ENCODE measurements at regions of chr11 and their contacts with region 1.

Region 1: DNA sequence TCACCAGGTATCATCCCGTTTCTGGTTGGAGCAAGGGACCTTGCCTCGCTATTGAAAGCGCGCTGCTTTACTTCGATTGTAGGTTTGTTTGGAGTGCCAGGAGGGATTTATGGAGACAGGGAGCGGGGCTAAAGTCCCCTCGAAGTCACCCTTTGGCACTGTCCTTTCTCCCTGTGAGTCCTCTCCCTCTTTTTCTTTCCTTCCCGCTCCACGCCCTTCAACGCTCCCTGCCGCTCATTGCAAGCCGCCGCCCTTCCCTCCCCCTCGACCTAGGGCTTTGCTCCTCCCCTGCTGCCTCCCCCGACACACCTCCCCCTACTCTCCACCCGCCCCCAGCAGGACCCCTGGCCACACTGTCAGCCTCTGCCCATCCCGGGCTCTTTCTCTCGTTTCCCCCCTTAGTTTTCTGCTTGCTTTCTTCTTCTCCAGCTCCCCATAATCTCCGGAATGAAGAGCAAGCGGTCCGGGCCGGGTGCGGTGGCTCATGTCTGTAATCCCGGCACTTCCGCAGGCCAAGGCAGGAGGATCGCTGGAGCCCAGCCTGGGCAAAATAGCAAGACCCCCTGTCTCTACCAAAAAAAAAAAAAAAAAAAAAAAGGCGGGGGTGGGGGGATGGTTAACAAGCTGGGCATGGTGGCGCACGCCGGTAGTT is 41.0 kb downstream of the AHNAK start:
- DNase-seq: no peak
- H3K4me3 ChIP-seq: no peak overlapping the region
- H3K4me3 Mint-ChIP-seq: no peak overlapping the region
- H3K27ac ChIP-seq: no peak overlapping the region
- H3K27ac Mint-ChIP-seq: peak overlapping the region in 2 of 8 donors; percentile 27 to 40
- H3K4me1 ChIP-seq: no peaks in the 10 kb centered on the region
- H3K4me1 Mint-ChIP-seq: peaks cover 2 to 9% (median 7%) of the 10 kb centered on the region in 3 donors
- H3K27me3 ChIP-seq: no peaks in the 10 kb centered on the region
- H3K27me3 Mint-ChIP-seq: no peaks in the 10 kb centered on the region

Region 2: GRCh38 chr11:62468577-62468976 is 37.0 kb before region 1 on chr11:
- CTCF ChIA-PET with region 1: no interaction called
- POLR2A ChIA-PET with region 1: interaction called, 10 read pairs
- DNase-seq: no peak
- H3K4me3 ChIP-seq: no peak overlapping the region
- H3K4me3 Mint-ChIP-seq: no peak overlapping the region
- H3K27ac ChIP-seq: no peak overlapping the region
- H3K27ac Mint-ChIP-seq: no peak overlapping the region
- H3K4me1 ChIP-seq: no peaks in the 10 kb centered on the region
- H3K4me1 Mint-ChIP-seq: no peaks in the 10 kb centered on the region
- H3K27me3 ChIP-seq: no peaks in the 10 kb centered on the region
- H3K27me3 Mint-ChIP-seq: peaks cover 0 to 1% of the 10 kb centered on the region in 2 donors

Measured in CD8-positive, alpha-beta memory T cell (primary cell).